Activated B cell treated with CpG ODN at 0.5 μM for 24 hours (primary cell): ENCODE measurements at regions of chr7 and their contacts with region 1.

Region 1: GRCh38 chr7:140924019-140924820 is 509 bp downstream of the BRAF start:
- DNase-seq: peak; percentile 71
- ATAC-seq: peak; percentile 75
- H3K4me3 Mint-ChIP-seq: no peak overlapping the region
- H3K27ac Mint-ChIP-seq: no peak overlapping the region
- H3K4me1 Mint-ChIP-seq: peaks cover 28% of the 10 kb centered on the region
- H3K27me3 Mint-ChIP-seq: no peaks in the 10 kb centered on the region
- CTCF ChIP-seq: no peak

Region 2: DNA sequence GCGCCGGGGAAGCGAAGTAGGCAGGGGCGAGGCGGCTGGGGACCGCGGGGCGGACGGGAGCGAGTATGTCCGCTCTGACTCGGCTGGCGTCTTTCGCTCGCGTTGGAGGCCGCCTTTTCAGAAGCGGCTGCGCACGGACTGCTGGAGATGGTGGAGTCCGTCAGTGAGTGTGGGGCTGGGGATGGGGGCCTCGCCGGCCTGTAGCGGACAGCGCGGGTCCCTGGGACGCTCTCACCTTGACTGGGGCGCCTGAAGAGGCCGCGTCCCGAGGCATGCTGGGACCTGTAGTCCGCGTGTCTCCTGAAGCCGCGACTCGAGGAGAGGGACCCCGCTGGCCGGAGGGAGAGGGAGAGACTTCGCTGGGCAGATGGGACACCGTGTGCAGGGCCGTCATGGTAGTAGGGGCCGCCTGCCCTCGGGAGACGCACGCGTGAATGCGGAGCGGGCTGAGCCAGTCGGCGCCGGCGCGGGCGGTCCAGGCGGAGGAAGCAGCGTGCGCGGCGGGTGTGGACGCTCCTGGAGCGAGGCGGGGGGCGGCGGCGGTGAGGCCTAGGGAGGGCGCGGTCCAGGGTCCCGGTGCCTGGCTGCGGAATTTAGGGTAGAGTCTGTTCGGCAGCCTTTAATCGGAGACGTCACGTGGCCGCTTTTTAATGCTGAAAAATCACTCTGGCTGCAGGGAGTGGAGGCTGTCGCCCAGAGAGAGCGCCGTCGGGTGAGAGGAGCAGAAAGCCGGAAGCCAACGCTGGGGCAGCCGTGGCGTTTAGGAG is 227.4 kb before region 1 on chr7 and contains the start of gene NDUFB2:
- CTCF ChIA-PET with region 1: no interaction called
- POLR2A ChIA-PET with region 1: no interaction called
- intact Hi-C with region 1: loop called (anchors 1 kb)
- DNase-seq: peak; percentile 90
- ATAC-seq: peak; percentile 86
- H3K4me3 Mint-ChIP-seq: peak within 1 kb of the TSS; percentile 94
- H3K27ac Mint-ChIP-seq: peak within 1 kb of the TSS; percentile 98
- H3K4me1 Mint-ChIP-seq: peaks cover 34% of the 10 kb centered on the region
- H3K27me3 Mint-ChIP-seq: no peaks in the 10 kb centered on the region
- CTCF ChIP-seq: no peak
- total RNA-seq, gene NDUFB2: 140 and 168 TPM in 2 replicates

Region 3: DNA sequence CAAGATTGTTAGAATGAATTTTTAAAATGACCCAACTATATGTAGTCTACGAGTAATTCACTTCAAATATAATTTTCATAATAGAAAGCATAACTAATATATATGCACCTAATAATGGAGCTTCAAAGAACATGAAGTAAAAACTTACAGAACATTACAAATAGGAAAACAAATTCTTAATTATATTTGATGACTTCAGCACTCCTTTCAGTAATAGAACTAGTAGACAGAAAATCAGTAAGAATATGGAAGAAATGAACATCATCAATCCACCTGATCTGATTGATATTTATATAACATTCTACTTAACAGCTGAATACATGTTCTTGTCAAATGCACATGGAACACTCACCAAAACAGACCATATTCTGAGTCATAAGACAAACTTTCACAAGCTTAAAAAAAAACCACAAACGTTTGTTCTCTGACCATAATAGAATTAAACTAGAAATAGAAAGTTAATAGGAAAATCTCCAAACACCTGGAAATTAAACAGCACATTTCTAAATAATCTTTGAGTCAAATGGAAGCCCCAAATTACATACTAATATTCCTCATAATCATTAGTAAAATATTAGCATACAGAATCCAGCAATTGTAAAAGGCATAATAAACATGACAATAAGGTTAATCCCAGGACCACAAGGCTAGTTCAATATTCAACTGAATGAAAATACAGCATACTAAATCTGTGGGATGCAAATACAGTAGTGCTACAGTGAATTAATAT is 47.5 kb before region 1 on chr7:
- CTCF ChIA-PET with region 1: no interaction called
- POLR2A ChIA-PET with region 1: interaction called, 4 read pairs
- intact Hi-C with region 1: loop called (anchors 2 kb)
- DNase-seq: no peak
- ATAC-seq: no peak
- H3K4me3 Mint-ChIP-seq: no peak overlapping the region
- H3K27ac Mint-ChIP-seq: no peak overlapping the region
- H3K4me1 Mint-ChIP-seq: peaks cover 57% of the 10 kb centered on the region
- H3K27me3 Mint-ChIP-seq: no peaks in the 10 kb centered on the region
- CTCF ChIP-seq: no peak

Region 4: DNA sequence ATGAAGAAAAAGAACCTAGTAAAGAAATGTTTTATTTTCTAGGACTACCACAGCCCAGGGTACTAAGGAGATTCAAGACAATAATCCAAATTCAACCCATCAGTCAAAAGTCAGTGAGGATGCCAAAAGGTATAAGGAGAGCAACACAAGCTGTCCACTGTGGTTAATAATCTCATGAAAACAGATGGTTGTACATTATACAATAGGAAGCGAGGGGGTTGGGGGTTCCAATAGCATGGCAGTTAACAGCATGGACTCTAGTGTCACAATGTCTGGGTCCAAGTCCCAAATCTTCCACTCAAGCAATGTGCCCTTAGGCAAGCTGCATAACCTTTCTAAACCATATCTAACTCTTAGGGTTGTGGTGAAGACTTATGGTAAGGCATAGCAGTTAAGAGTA is 34.6 kb before region 1 on chr7:
- CTCF ChIA-PET with region 1: no interaction called
- POLR2A ChIA-PET with region 1: no interaction called
- intact Hi-C with region 1: no loop called
- DNase-seq: no peak
- ATAC-seq: no peak
- H3K4me3 Mint-ChIP-seq: no peak overlapping the region
- H3K27ac Mint-ChIP-seq: no peak overlapping the region
- H3K4me1 Mint-ChIP-seq: peaks cover 80% of the 10 kb centered on the region
- H3K27me3 Mint-ChIP-seq: no peaks in the 10 kb centered on the region
- CTCF ChIP-seq: no peak

Region 5: GRCh38 chr7:141701489-141702046 is 777.3 kb after region 1 on chr7:
- CTCF ChIA-PET with region 1: no interaction called
- POLR2A ChIA-PET with region 1: no interaction called
- intact Hi-C with region 1: loop called (anchors 2 kb)
- DNase-seq: peak; percentile 69
- ATAC-seq: peak; percentile 89
- H3K4me3 Mint-ChIP-seq: peak overlapping the region; percentile 85
- H3K27ac Mint-ChIP-seq: peak overlapping the region; percentile 75
- H3K4me1 Mint-ChIP-seq: peaks cover 50% of the 10 kb centered on the region
- H3K27me3 Mint-ChIP-seq: no peaks in the 10 kb centered on the region
- CTCF ChIP-seq: no peak